Activated CD4-positive, alpha-beta memory T cell treated with anti-CD3 and anti-CD28 coated beads for 36 hours (primary cell): ENCODE measurements at regions of chr12 and their contacts with region 1.

Region 1: GRCh38 chr12:13255792-13256691 is 59.5 kb downstream of the EMP1 start:
- DNase-seq: peak; percentile 91
- H3K4me3 Mint-ChIP-seq: no peak overlapping the region
- H3K27ac Mint-ChIP-seq: no peak overlapping the region
- H3K4me1 Mint-ChIP-seq: no peaks in the 10 kb centered on the region
- H3K27me3 Mint-ChIP-seq: peaks cover 6% of the 10 kb centered on the region

Region 2: DNA sequence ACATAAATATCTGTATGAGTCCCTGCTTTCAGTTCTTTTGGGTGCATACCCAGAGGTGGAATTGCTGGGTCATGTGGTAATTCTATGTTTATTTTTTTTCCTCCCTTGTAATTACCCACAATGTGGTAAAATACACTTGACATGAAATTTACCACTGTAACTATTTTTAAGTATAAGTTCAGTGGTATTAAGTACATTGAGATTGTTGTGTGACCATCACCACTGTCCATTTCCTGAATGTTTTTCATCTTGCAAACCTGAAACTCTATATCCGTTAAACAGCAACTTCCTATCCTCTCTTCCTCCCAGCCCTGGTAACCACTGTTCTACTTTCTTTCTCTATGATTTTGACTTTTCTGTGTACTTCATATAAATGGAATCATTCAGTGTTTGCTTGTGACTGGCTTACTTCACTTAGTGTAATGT is 847.8 kb before region 1 on chr12:
- CTCF ChIA-PET with region 1: no interaction called
- POLR2A ChIA-PET with region 1: no interaction called
- intact Hi-C with region 1: no loop called
- DNase-seq: no peak
- H3K4me3 Mint-ChIP-seq: no peak overlapping the region
- H3K27ac Mint-ChIP-seq: peak overlapping the region; percentile 24
- H3K4me1 Mint-ChIP-seq: peaks cover 36% of the 10 kb centered on the region
- H3K27me3 Mint-ChIP-seq: no peaks in the 10 kb centered on the region

Region 3: GRCh38 chr12:12790931-12791330 is 465.1 kb before region 1 on chr12:
- CTCF ChIA-PET with region 1: no interaction called
- POLR2A ChIA-PET with region 1: no interaction called
- intact Hi-C with region 1: no loop called
- DNase-seq: no peak
- H3K4me3 Mint-ChIP-seq: no peak overlapping the region
- H3K27ac Mint-ChIP-seq: no peak overlapping the region
- H3K4me1 Mint-ChIP-seq: peaks cover 21% of the 10 kb centered on the region
- H3K27me3 Mint-ChIP-seq: no peaks in the 10 kb centered on the region

Region 4: GRCh38 chr12:12916135-12916944 is 339.7 kb before region 1 on chr12:
- CTCF ChIA-PET with region 1: interaction called, 19 read pairs
- POLR2A ChIA-PET with region 1: no interaction called
- intact Hi-C with region 1: no loop called
- DNase-seq: peak; percentile 91
- H3K4me3 Mint-ChIP-seq: no peak overlapping the region
- H3K27ac Mint-ChIP-seq: no peak overlapping the region
- H3K4me1 Mint-ChIP-seq: peaks cover 9% of the 10 kb centered on the region
- H3K27me3 Mint-ChIP-seq: peaks cover 12% of the 10 kb centered on the region

Region 5: GRCh38 chr12:13233830-13234641 is 22.0 kb before region 1 on chr12:
- CTCF ChIA-PET with region 1: interaction called, 12 read pairs
- POLR2A ChIA-PET with region 1: no interaction called
- intact Hi-C with region 1: no loop called
- DNase-seq: peak; percentile 25
- H3K4me3 Mint-ChIP-seq: no peak overlapping the region
- H3K27ac Mint-ChIP-seq: no peak overlapping the region
- H3K4me1 Mint-ChIP-seq: no peaks in the 10 kb centered on the region
- H3K27me3 Mint-ChIP-seq: peaks cover 6% of the 10 kb centered on the region

Region 6: DNA sequence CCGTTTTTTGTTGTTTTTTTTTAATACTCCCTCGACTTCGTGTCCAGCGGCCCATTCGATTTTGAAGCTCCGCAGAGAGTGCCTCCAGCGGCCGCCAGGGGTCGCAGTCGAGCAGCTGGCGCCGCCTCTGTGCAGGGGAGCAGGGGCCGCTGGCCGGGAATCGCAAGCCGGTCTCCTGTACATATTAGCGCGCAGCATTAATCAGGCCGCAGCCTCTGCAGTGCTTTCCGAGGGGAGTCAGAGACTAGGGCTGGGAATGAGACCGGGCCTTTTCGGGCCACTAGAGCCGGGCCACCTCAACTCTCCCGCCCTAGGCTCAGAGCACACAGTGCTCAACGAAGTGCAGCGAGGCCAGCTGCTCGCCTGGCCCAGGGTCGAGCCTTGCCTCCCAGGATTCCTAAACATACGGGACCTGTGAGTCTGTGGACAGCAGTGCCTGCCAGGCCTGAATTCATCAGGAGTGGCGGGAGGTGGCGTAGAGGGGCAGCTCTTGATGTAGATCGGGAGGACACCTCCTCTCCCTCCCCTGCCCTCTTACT is 22.3 kb after region 1 on chr12:
- CTCF ChIA-PET with region 1: interaction called, 24 read pairs
- POLR2A ChIA-PET with region 1: no interaction called
- intact Hi-C with region 1: no loop called
- DNase-seq: peak; percentile 70
- H3K4me3 Mint-ChIP-seq: no peak overlapping the region
- H3K27ac Mint-ChIP-seq: no peak overlapping the region
- H3K4me1 Mint-ChIP-seq: peaks cover 2% of the 10 kb centered on the region
- H3K27me3 Mint-ChIP-seq: peaks cover 33% of the 10 kb centered on the region

Region 7: GRCh38 chr12:13661005-13661887 is 405.2 kb after region 1 on chr12:
- CTCF ChIA-PET with region 1: interaction called, 10 read pairs
- POLR2A ChIA-PET with region 1: no interaction called
- intact Hi-C with region 1: no loop called
- DNase-seq: peak; percentile 30
- H3K4me3 Mint-ChIP-seq: no peak overlapping the region
- H3K27ac Mint-ChIP-seq: no peak overlapping the region
- H3K4me1 Mint-ChIP-seq: no peaks in the 10 kb centered on the region
- H3K27me3 Mint-ChIP-seq: no peaks in the 10 kb centered on the region

Region 8: DNA sequence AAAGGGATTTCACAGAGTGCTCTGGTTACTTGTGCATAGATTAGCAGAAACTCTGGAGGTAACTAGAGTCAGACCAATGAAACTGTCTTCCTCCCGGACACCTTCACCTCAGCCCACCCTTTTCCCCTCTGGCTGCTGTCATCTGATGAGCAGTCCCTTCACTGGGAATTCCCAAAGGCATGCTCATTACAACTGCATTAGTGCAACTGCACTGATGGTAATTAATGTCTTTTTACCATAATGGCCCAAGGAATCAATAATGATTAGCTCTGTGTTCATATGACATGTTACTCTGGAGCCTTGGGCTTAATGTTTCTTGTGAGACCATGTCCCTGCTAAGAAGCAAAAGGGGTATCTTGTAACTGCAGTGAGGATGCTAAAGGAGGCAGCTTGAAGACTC is 420.8 kb after region 1 on chr12:
- CTCF ChIA-PET with region 1: no interaction called
- POLR2A ChIA-PET with region 1: no interaction called
- intact Hi-C with region 1: no loop called
- DNase-seq: no peak
- H3K4me3 Mint-ChIP-seq: no peak overlapping the region
- H3K27ac Mint-ChIP-seq: no peak overlapping the region
- H3K4me1 Mint-ChIP-seq: no peaks in the 10 kb centered on the region
- H3K27me3 Mint-ChIP-seq: peaks cover 2% of the 10 kb centered on the region